ENCODE measurements at regions of chr6 and their contacts with region 1.

Region 1: DNA sequence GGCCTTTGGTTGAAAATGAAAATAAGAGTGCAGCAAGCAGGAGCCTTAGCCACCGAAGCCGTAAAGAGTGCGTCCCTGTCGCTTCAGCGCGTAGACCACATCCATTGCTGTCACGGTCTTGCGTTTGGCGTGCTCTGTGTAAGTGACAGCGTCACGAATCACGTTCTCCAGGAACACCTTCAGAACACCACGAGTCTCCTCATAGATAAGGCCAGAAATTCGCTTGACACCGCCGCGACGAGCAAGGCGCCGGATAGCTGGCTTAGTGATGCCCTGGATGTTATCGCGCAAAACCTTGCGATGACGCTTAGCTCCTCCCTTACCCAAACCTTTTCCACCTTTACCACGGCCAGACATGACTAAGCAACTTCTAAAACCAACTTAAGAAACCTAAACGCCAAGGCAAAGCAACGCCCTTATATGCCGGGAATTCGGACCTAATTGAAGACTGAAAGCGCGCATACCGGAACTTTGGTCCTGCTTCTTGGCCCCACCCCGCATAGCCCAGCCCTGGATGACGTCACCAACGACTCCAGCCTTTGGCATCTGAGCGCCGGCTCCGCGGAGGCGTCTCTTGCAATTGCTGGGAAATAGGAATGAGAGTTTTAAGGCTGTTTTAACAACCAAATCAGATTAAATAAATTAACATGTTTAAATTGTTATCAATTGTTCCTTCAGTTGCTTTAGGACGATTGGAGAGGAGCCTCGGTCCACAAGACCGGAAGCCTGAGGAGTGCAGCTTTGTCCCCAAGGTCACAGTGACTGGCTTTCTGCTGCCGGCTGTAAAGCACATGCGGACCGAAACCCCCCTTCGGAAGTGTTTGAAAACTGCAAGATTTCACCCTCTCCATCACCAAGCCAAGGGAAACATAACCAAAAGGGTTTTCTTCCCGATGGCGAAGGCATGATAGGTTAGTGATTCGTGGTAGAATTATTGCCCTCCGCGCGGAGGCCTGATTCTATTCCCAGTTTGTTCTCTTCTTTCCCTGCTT is 79.6 kb upstream of the BTN3A2 start:
- DNase-seq: peak; percentile 98
- H3K4me3 Mint-ChIP-seq: peak overlapping the region; percentile 83
- H3K27ac Mint-ChIP-seq: peak overlapping the region; percentile 96
- H3K4me1 Mint-ChIP-seq: peaks cover 39% of the 10 kb centered on the region
- H3K27me3 Mint-ChIP-seq: peaks cover 4% of the 10 kb centered on the region

Region 2: DNA sequence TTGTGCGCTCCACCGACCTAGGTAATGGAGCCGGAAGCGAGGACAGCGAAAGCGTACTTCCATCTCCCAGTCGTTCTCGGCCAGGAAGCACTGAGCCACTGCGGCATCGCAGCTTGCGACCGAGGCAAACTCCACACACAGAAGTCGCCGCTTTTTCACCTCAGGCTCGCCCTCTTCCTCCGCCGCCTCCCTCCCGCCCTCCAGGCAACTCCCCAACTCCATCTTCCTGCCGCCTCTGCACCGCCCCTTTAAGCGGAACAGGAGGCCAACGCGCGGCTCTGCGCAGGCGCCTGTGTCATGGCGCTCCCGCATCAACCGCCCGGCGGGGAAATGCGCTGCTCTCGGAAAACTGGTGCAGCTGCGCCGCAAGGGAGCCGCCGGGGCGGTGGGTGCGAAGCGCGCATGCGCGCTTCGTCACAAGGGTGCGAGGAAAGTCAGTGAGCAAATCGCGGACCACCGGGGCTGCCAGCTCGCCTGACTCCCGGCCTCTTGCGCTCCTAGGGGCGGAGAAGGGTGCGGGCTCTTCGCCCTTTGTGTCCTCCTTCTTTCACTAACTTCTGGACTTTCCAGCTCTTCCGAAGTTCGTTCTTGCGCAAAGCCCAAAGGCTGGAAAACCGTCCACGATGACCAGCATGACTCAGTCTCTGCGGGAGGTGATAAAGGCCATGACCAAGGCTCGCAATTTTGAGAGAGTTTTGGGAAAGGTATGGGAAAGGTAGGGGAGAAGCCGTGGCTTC is 1618.6 kb before region 1 on chr6 and contains the starts of genes ACOT13 and TDP2:
- CTCF ChIA-PET with region 1: no interaction called
- POLR2A ChIA-PET with region 1: no interaction called
- DNase-seq: peak; percentile 96
- H3K4me3 Mint-ChIP-seq: peak within 1 kb of the TSS; percentile 88
- H3K27ac Mint-ChIP-seq: peak within 1 kb of the TSS; percentile 92
- H3K4me1 Mint-ChIP-seq: peaks cover 48% of the 10 kb centered on the region
- H3K27me3 Mint-ChIP-seq: no peaks in the 10 kb centered on the region
- total RNA-seq, gene ACOT13: 19.9 to 21.1 TPM
- total RNA-seq, gene TDP2: 43.8 to 45.4 TPM

Region 3: GRCh38 chr6:26025894-26026832 is 259.3 kb before region 1 on chr6:
- CTCF ChIA-PET with region 1: interaction called, 3 read pairs
- POLR2A ChIA-PET with region 1: interaction called, 23 read pairs
- DNase-seq: peak; percentile 94
- H3K4me3 Mint-ChIP-seq: peak overlapping the region; percentile 75
- H3K27ac Mint-ChIP-seq: peak overlapping the region; percentile 100
- H3K4me1 Mint-ChIP-seq: peaks cover 84% of the 10 kb centered on the region
- H3K27me3 Mint-ChIP-seq: peaks cover 2% of the 10 kb centered on the region

Region 4: DNA sequence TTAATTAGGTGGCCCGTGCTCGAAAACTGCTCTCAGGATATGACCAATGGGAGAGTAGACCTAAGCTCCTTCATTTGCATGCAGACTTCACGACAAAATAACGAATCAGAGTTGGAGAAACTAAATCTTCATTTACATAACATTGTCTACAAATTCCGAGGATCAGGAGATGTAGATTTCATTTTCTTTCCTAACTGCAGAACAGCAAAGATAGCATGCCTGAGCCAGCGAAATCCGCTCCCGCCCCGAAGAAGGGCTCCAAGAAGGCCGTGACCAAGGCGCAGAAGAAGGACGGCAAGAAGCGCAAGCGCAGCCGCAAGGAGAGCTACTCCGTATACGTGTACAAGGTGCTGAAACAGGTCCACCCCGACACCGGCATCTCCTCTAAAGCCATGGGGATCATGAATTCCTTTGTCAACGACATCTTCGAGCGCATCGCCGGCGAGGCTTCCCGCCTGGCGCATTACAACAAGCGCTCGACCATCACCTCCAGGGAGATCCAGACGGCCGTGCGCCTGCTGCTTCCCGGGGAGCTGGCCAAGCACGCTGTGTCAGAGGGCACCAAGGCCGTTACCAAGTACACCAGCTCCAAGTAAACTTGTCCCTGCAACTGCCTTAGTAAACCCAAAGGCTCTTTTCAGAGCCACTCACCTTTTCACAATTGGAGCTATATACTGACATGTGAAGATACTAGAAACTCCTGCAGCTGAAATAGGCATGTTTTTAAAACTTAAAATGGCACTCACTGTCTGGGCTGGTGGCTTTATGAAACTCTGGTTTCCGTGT is 101.7 kb before region 1 on chr6:
- CTCF ChIA-PET with region 1: interaction called, 4 read pairs
- POLR2A ChIA-PET with region 1: interaction called, 34 read pairs
- DNase-seq: peak; percentile 78
- H3K4me3 Mint-ChIP-seq: peak overlapping the region; percentile 75
- H3K27ac Mint-ChIP-seq: peak overlapping the region; percentile 92
- H3K4me1 Mint-ChIP-seq: peaks cover 71% of the 10 kb centered on the region
- H3K27me3 Mint-ChIP-seq: no peaks in the 10 kb centered on the region

Region 5: GRCh38 chr6:26223650-26224546 is 61.5 kb before region 1 on chr6:
- CTCF ChIA-PET with region 1: no interaction called
- POLR2A ChIA-PET with region 1: interaction called, 33 read pairs
- DNase-seq: peak; percentile 72
- H3K4me3 Mint-ChIP-seq: no peak overlapping the region
- H3K27ac Mint-ChIP-seq: no peak overlapping the region
- H3K4me1 Mint-ChIP-seq: peaks cover 31% of the 10 kb centered on the region
- H3K27me3 Mint-ChIP-seq: no peaks in the 10 kb centered on the region

Region 6: GRCh38 chr6:26295691-26296555 is 10.5 kb after region 1 on chr6:
- CTCF ChIA-PET with region 1: no interaction called
- POLR2A ChIA-PET with region 1: interaction called, 12 read pairs
- DNase-seq: no peak
- H3K4me3 Mint-ChIP-seq: peak overlapping the region; percentile 36
- H3K27ac Mint-ChIP-seq: peak overlapping the region; percentile 39
- H3K4me1 Mint-ChIP-seq: peaks cover 14% of the 10 kb centered on the region
- H3K27me3 Mint-ChIP-seq: no peaks in the 10 kb centered on the region

Region 7: GRCh38 chr6:26473758-26474438 is 188.5 kb after region 1 on chr6:
- CTCF ChIA-PET with region 1: no interaction called
- POLR2A ChIA-PET with region 1: interaction called, 19 read pairs
- DNase-seq: peak; percentile 86
- H3K4me3 Mint-ChIP-seq: peak overlapping the region; percentile 99
- H3K27ac Mint-ChIP-seq: peak overlapping the region; percentile 100
- H3K4me1 Mint-ChIP-seq: peaks cover 36% of the 10 kb centered on the region
- H3K27me3 Mint-ChIP-seq: no peaks in the 10 kb centered on the region

Region 8: DNA sequence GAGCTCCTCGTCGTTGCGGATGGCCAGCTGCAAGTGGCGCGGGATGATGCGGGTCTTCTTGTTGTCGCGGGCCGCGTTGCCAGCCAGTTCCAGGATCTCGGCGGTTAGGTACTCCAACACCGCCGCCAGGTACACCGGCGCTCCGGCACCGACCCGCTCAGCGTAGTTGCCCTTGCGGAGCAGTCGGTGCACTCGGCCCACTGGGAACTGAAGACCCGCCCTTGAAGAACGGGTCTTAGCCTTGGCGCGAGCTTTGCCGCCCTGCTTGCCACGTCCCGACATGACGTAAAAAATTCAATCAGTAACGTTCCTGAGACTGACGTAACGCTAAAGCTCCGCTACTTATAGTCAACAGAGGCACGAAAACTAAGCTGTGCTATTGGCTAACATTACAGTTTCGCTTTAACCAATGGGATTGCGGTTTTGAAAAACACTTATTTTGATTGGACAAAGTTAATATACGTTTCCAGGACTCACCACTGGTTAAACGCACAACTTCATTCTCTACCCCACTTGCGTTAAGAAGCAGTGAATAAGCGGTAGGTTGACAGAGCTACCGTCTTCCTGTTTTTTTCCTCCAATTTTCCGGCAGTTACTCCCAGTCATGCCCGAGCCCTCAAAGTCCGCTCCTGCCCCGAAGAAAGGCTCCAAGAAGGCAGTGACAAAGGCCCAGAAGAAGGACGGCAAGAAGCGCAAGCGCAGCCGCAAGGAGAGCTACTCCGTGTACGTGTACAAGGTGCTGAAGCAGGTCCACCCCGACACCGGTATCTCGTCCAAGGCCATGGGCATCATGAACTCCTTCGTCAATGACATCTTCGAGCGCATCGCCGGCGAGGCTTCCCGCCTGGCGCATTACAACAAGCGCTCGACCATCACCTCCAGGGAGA is 1552.9 kb after region 1 on chr6:
- CTCF ChIA-PET with region 1: no interaction called
- POLR2A ChIA-PET with region 1: interaction called, 23 read pairs
- DNase-seq: peak; percentile 90
- H3K4me3 Mint-ChIP-seq: no peak overlapping the region
- H3K27ac Mint-ChIP-seq: no peak overlapping the region
- H3K4me1 Mint-ChIP-seq: peaks cover 31% of the 10 kb centered on the region
- H3K27me3 Mint-ChIP-seq: no peaks in the 10 kb centered on the region

Region 9: GRCh38 chr6:28090917-28091586 is 1805.6 kb after region 1 on chr6:
- CTCF ChIA-PET with region 1: no interaction called
- POLR2A ChIA-PET with region 1: no interaction called
- DNase-seq: no peak
- H3K4me3 Mint-ChIP-seq: no peak overlapping the region
- H3K27ac Mint-ChIP-seq: no peak overlapping the region
- H3K4me1 Mint-ChIP-seq: no peaks in the 10 kb centered on the region
- H3K27me3 Mint-ChIP-seq: no peaks in the 10 kb centered on the region

Measured in activated CD4-positive, alpha-beta memory T cell treated with anti-CD3 and anti-CD28 coated beads, Interleukin-2, amount 10 ng/mL, durations not matched to agents 7 days and 5 days (primary cell).